Caco-2 (cell line): ENCODE measurements at regions of chr1 and their contacts with region 1.

Region 1: DNA sequence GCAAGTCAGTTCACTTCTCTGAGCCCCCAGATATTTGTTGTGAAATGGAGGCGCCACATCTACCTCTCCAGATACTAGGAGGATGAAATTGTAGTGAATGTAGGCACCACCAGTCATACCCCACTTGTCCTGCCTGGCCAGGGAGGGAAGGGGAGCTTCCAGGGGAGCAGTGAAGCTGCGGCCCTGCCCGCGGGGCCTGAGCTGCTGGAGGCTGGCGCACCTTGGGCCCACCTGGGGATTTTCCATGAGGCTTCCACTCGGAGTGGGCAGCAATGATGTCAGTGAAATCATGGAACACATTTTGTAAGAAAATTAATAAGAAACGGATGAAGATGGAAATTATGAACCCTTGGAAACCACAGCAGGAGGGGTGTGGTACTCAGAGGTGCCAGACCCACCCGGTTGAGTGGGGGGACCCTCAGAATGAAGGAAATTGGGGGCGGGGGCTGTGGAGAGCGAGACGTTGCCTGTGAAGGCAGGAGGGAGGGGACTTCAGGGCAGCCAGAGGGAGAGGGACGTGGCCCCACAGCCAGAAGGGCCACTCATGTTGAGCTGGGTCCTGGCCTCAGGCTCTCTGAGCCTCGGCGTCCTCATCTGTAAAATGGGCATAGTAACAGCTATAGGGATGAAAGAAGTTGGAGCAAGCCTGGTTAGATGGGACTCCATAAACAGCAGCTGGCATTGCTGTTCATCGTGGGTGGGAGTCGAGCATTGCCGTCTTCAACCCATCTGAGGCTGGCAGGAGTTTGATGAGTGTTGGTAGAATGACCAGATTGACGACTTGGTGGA is 101.6 kb downstream of the EPHB2 start:
- DNase-seq: no peak
- H3K4me3 ChIP-seq: no peak overlapping the region
- H3K4me3 Mint-ChIP-seq: no peak overlapping the region
- H3K27ac Mint-ChIP-seq: no peak overlapping the region
- H3K4me1 ChIP-seq: no peaks in the 10 kb centered on the region
- H3K4me1 Mint-ChIP-seq: no peaks in the 10 kb centered on the region
- H3K27me3 ChIP-seq: no peaks in the 10 kb centered on the region
- H3K27me3 Mint-ChIP-seq: no peaks in the 10 kb centered on the region
- CTCF ChIP-seq: no peak

Region 2: DNA sequence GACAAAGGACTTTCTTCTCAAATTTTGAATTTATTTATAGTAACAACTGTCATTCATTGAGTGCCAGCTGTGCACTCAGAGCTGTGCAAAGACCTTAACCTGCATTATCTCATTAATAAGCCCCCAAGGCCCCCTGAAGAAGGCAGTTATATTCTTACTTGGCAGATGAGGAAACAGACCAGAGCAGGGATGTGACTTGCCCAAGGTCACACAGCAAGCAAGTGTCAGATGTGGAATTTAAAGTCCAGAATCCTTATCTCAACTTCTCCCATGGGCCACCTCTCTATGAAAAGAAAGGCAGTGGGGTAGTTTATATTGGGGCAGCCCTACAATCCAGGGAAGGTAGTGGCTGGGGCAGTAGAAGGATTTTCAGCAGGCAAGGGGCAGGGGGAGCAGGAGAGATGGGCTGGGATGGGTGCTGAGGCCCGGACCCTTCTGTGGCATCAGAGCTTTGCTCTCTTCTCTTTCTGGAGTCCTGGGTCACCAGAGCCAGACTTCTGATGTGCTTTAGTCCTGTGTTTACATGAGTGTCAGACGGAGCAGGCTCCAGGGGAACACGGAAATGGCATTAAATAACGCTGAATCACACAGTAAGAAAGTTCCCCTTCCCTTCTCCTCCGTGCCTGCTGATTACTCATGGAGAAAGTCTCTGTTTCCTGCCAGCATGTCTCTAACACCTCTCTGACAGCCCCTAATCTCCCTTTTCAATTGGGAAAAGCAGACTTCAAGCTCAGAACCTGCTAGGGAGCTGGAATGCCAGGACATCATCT is 62.2 kb before region 1 on chr1:
- CTCF ChIA-PET with region 1: no interaction called
- POLR2A ChIA-PET with region 1: no interaction called
- intact Hi-C with region 1: no loop called
- DNase-seq: peak in 1 of 2 experiments; percentile 45
- H3K4me3 ChIP-seq: no peak overlapping the region
- H3K4me3 Mint-ChIP-seq: no peak overlapping the region
- H3K27ac Mint-ChIP-seq: peak overlapping the region; percentile 59
- H3K4me1 ChIP-seq: peaks cover 7% of the 10 kb centered on the region
- H3K4me1 Mint-ChIP-seq: peaks cover 17% of the 10 kb centered on the region
- H3K27me3 ChIP-seq: no peaks in the 10 kb centered on the region
- H3K27me3 Mint-ChIP-seq: no peaks in the 10 kb centered on the region
- CTCF ChIP-seq: no peak

Region 3: GRCh38 chr1:22841860-22842281 is 29.6 kb after region 1 on chr1:
- CTCF ChIA-PET with region 1: interaction called, 6 read pairs
- POLR2A ChIA-PET with region 1: no interaction called
- intact Hi-C with region 1: loop called (anchors 1 kb)
- DNase-seq: no peak
- H3K4me3 ChIP-seq: no peak overlapping the region
- H3K4me3 Mint-ChIP-seq: no peak overlapping the region
- H3K27ac Mint-ChIP-seq: no peak overlapping the region
- H3K4me1 ChIP-seq: no peaks in the 10 kb centered on the region
- H3K4me1 Mint-ChIP-seq: peaks cover 8% of the 10 kb centered on the region
- H3K27me3 ChIP-seq: no peaks in the 10 kb centered on the region
- H3K27me3 Mint-ChIP-seq: no peaks in the 10 kb centered on the region
- CTCF ChIP-seq: no peak

Region 4: GRCh38 chr1:22861764-22862440 is 49.6 kb after region 1 on chr1:
- CTCF ChIA-PET with region 1: no interaction called
- POLR2A ChIA-PET with region 1: no interaction called
- intact Hi-C with region 1: no loop called
- DNase-seq: peak; percentile 42 to 48
- H3K4me3 ChIP-seq: no peak overlapping the region
- H3K4me3 Mint-ChIP-seq: no peak overlapping the region
- H3K27ac Mint-ChIP-seq: no peak overlapping the region
- H3K4me1 ChIP-seq: no peaks in the 10 kb centered on the region
- H3K4me1 Mint-ChIP-seq: no peaks in the 10 kb centered on the region
- H3K27me3 ChIP-seq: no peaks in the 10 kb centered on the region
- H3K27me3 Mint-ChIP-seq: no peaks in the 10 kb centered on the region
- CTCF ChIP-seq: peak; percentile 74 to 79

Region 5: DNA sequence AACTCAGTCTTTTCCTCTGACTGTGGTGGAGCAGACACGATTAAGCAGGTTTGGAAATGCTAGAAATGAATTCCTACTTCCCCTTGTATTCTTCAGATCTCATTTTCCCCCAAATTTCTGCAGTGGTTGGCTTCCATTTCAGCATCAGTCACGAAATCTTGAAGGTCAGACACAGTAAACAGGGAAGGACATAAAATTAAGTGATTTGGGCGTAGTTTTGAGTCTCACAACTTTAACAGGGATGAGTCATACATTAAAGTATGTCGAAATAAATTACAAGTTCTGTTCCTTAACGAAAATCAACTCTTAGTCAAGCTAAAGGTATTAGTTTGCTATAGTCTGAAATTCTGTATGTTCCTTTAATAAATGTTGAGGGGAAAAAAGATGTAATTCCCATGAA is 470.7 kb after region 1 on chr1:
- CTCF ChIA-PET with region 1: no interaction called
- POLR2A ChIA-PET with region 1: no interaction called
- intact Hi-C with region 1: no loop called
- DNase-seq: no peak
- H3K4me3 ChIP-seq: no peak overlapping the region
- H3K4me3 Mint-ChIP-seq: no peak overlapping the region
- H3K27ac Mint-ChIP-seq: no peak overlapping the region
- H3K4me1 ChIP-seq: no peaks in the 10 kb centered on the region
- H3K4me1 Mint-ChIP-seq: peaks cover 11% of the 10 kb centered on the region
- H3K27me3 ChIP-seq: no peaks in the 10 kb centered on the region
- H3K27me3 Mint-ChIP-seq: no peaks in the 10 kb centered on the region
- CTCF ChIP-seq: no peak